ENCODE measurements at regions of chr17 and their contacts with region 1.

Region 1: DNA sequence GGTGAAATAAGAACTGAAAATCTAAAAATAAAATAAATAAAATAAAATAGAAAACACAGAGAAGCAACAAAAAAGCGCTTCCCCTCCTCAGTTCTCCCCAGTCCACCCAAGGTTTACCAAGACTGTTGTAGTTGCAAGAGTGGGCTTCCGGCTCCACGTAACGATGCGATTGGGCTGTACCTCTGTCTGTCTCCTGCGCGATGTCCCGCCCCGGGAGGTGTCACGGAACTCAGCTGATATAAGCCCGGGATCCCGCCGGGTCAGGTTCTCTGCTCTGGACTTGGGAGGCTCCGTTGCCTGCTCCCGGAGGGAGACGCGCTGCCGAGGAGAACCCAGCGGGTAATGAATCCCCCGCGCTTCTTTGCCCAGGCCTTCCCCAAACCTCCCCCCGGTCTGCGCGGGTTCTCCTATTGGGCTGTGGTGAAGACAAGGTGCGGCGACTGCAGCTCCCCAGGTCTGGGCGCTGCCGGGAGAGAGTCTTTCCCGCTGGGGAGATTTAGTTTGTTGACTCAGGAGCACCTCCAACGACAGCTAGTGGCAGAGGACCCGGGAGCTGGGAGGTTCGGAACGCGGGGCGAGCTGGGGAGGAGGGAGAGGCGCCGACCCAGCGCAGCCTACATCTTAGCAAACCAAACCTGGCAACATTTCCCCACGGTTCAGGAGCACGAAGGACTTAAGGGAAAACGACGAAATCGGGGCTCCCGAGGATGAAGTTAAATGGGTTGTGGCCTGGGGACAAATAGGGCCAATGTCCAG is at the start of gene SLFN5:
- DNase-seq: peak; percentile 95
- ATAC-seq: peak; percentile 72
- H3K4me3 Mint-ChIP-seq: peak within 1 kb of the TSS; percentile 93
- H3K27ac Mint-ChIP-seq: peak within 1 kb of the TSS; percentile 97
- H3K4me1 Mint-ChIP-seq: peaks cover 64% of the 10 kb centered on the region
- H3K27me3 Mint-ChIP-seq: no peaks in the 10 kb centered on the region
- CTCF ChIP-seq: no peak
- total RNA-seq, gene SLFN5: 29.1 to 32.7 TPM

Region 2: GRCh38 chr17:35063514-35064223 is 179.3 kb before region 1 on chr17 and contains the start of gene RFFL:
- CTCF ChIA-PET with region 1: no interaction called
- POLR2A ChIA-PET with region 1: no interaction called
- intact Hi-C with region 1: no loop called
- DNase-seq: peak; percentile 96
- ATAC-seq: peak; percentile 98
- H3K4me3 Mint-ChIP-seq: peak within 1 kb of the TSS; percentile 22
- H3K27ac Mint-ChIP-seq: peak within 1 kb of the TSS; percentile 87
- H3K4me1 Mint-ChIP-seq: peaks cover 51% of the 10 kb centered on the region
- H3K27me3 Mint-ChIP-seq: no peaks in the 10 kb centered on the region
- CTCF ChIP-seq: no peak
- total RNA-seq, gene RFFL: 11.3 to 12.0 TPM

Region 3: GRCh38 chr17:35170968-35171771 is 71.8 kb before region 1 on chr17:
- CTCF ChIA-PET with region 1: interaction called, 9 read pairs
- POLR2A ChIA-PET with region 1: interaction called, 6 read pairs
- intact Hi-C with region 1: loop called (anchors 5 kb)
- DNase-seq: peak; percentile 31
- ATAC-seq: peak; percentile 83
- H3K4me3 Mint-ChIP-seq: peak overlapping the region; percentile 20
- H3K27ac Mint-ChIP-seq: peak overlapping the region; percentile 79
- H3K4me1 Mint-ChIP-seq: peaks cover 38% of the 10 kb centered on the region
- H3K27me3 Mint-ChIP-seq: no peaks in the 10 kb centered on the region
- CTCF ChIP-seq: peak; percentile 69

Region 4: GRCh38 chr17:35214631-35215273 is 28.2 kb before region 1 on chr17:
- CTCF ChIA-PET with region 1: interaction called, 18 read pairs
- POLR2A ChIA-PET with region 1: interaction called, 80 read pairs
- intact Hi-C with region 1: loop called (anchors 1 kb)
- DNase-seq: peak; percentile 60
- ATAC-seq: peak; percentile 65
- H3K4me3 Mint-ChIP-seq: peak overlapping the region; percentile 59
- H3K27ac Mint-ChIP-seq: peak overlapping the region; percentile 91
- H3K4me1 Mint-ChIP-seq: peaks cover 79% of the 10 kb centered on the region
- H3K27me3 Mint-ChIP-seq: no peaks in the 10 kb centered on the region
- CTCF ChIP-seq: no peak

Region 5: DNA sequence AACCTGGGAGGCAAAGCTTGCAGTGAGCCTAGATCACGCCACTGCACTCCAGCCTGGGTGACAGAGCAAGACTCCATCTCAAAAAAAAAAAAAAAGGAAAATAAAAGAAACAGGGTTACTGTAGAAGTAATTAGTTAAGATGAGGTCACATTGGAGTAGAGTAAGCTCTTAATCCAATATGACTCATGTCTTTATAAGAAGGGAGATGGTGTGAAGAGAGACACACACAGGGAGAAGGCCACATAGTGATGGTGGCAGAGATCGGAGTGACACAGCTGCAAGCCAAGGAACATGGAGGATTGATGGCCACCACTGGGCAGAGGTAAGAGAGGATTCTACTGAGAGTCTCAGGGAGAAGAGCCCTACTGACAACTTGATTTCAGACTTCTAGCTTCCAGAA is 15.4 kb before region 1 on chr17:
- CTCF ChIA-PET with region 1: interaction called, 12 read pairs
- POLR2A ChIA-PET with region 1: interaction called, 10 read pairs
- intact Hi-C with region 1: no loop called
- DNase-seq: no peak
- ATAC-seq: peak; percentile 50
- H3K4me3 Mint-ChIP-seq: no peak overlapping the region
- H3K27ac Mint-ChIP-seq: no peak overlapping the region
- H3K4me1 Mint-ChIP-seq: peaks cover 44% of the 10 kb centered on the region
- H3K27me3 Mint-ChIP-seq: no peaks in the 10 kb centered on the region
- CTCF ChIP-seq: no peak

Region 6: DNA sequence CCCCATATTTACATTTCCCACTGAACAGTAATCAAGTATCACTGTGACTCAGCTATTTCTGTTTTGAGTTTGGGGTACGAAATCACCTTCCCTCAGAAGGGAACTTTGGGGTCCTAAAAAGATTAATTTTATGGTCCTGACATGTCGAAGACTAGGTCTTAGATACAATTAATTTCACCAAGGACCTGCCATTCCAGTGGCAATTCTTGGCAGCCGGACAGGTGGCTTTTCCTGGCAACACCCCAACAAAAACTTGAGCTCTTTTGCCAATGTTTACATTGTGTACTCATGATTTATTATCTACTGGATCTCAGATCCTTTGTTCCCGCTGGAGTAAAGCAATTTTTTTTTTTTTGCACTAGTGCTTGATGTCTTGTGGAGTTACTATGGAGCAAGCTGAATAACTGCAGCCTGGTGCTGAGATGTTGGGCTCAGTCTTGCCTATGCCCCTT is 14.3 kb after region 1 on chr17:
- CTCF ChIA-PET with region 1: interaction called, 4 read pairs
- POLR2A ChIA-PET with region 1: interaction called, 12 read pairs
- intact Hi-C with region 1: no loop called
- DNase-seq: no peak
- ATAC-seq: peak; percentile 31
- H3K4me3 Mint-ChIP-seq: no peak overlapping the region
- H3K27ac Mint-ChIP-seq: peak overlapping the region; percentile 83
- H3K4me1 Mint-ChIP-seq: peaks cover 75% of the 10 kb centered on the region
- H3K27me3 Mint-ChIP-seq: no peaks in the 10 kb centered on the region
- CTCF ChIP-seq: no peak

Region 7: GRCh38 chr17:35265566-35266141 is 22.7 kb after region 1 on chr17:
- CTCF ChIA-PET with region 1: interaction called, 3 read pairs
- POLR2A ChIA-PET with region 1: interaction called, 14 read pairs
- intact Hi-C with region 1: no loop called
- DNase-seq: no peak
- ATAC-seq: no peak
- H3K4me3 Mint-ChIP-seq: no peak overlapping the region
- H3K27ac Mint-ChIP-seq: peak overlapping the region; percentile 83
- H3K4me1 Mint-ChIP-seq: peaks cover 63% of the 10 kb centered on the region
- H3K27me3 Mint-ChIP-seq: no peaks in the 10 kb centered on the region
- CTCF ChIP-seq: no peak

Region 8: DNA sequence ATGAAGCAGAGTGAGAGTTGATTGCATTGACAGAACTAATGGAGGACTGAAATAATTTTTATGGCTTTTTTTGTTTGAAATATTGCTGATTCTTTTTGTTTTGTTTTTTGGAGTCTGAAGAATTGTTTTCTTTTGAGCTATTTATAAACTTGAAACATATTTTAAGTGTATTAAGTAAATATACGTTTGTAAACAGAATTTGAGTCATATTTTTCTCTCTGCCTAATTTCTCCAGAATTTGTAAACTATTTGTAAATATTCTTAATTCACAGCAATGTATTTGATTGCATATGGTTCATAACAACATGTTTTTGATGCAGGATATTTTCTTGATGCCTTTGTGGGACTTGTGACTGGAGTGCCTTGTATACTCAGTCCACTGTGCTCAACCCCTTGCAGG is 79.8 kb after region 1 on chr17:
- CTCF ChIA-PET with region 1: no interaction called
- POLR2A ChIA-PET with region 1: no interaction called
- intact Hi-C with region 1: no loop called
- DNase-seq: no peak
- ATAC-seq: no peak
- H3K4me3 Mint-ChIP-seq: no peak overlapping the region
- H3K27ac Mint-ChIP-seq: no peak overlapping the region
- H3K4me1 Mint-ChIP-seq: peaks cover 14% of the 10 kb centered on the region
- H3K27me3 Mint-ChIP-seq: no peaks in the 10 kb centered on the region
- CTCF ChIP-seq: no peak